ENCODE measurements at regions of chr12 and their contacts with region 1.

Region 1: GRCh38 chr12:9634177-9634803 is 26.6 kb upstream of the KLRB1 start:
- DNase-seq: no peak
- H3K4me3 ChIP-seq: no peak overlapping the region
- H3K27ac ChIP-seq: no peak overlapping the region
- H3K4me1 ChIP-seq: no peaks in the 10 kb centered on the region
- H3K27me3 ChIP-seq: no peaks in the 10 kb centered on the region
- CTCF ChIP-seq: peak; percentile 35 to 57 (median 38)
- EP300 ChIP-seq: no peak
- POLR2A ChIP-seq: no peak

Region 2: GRCh38 chr12:9615420-9616136 is 18.7 kb before region 1 on chr12:
- intact Hi-C with region 1: no loop called
- DNase-seq: no peak
- H3K4me3 ChIP-seq: no peak overlapping the region
- H3K27ac ChIP-seq: no peak overlapping the region
- H3K4me1 ChIP-seq: no peaks in the 10 kb centered on the region
- H3K27me3 ChIP-seq: no peaks in the 10 kb centered on the region
- CTCF ChIP-seq: no peak
- EP300 ChIP-seq: no peak
- POLR2A ChIP-seq: no peak

Region 3: DNA sequence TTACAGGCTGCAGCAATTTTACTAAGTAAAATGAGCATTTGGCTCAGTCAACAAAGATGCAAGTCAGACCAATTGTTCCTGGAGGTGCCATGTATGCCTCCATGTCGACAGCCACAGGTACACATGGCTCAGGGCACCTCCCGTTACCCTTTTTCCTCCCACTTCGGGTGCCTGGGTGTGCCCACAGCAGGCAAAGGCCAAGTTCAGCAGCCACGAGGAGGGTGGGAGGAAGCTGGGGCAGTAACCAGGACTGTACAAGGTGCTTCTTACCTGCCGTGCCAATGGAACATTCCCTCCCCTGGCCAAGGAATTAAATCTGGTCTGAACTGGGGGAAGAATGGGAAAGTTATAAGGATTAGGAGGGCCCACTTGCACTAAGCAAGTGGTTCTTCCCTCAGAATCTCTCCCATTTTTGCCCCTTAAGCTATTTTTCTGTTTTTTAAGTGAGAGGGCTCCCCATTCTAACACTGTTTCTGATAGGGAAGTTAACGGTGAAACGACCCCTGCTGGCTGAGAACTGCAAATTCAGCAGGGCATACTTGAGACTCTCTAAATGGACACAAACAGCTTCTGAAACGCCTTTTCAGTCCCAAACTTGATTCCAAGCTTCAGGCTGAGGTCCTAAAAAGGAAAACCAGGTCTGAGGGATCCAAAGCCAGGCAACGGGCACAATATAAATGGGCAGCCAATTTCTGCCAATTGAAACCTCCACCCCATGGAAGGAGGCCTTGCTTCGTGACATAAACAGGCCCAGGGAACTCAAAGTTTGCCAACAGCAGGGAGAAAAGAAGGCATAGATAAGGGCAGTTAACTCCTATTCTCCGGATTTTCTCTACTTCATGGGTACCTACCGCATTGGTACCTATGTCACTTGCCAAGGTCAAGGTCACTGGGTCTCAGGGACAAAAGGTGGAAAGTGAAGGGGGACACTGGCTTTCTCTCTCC is 73.8 kb after region 1 on chr12:
- intact Hi-C with region 1: loop called (anchors 5 kb)
- DNase-seq: no peak
- H3K4me3 ChIP-seq: no peak overlapping the region
- H3K27ac ChIP-seq: no peak overlapping the region
- H3K4me1 ChIP-seq: peaks cover 0 to 7% (median 0%) of the 10 kb centered on the region in 4 donors
- H3K27me3 ChIP-seq: peaks cover 0 to 3% (median 0%) of the 10 kb centered on the region in 4 donors
- CTCF ChIP-seq: peak; percentile 62 to 82 (median 71)
- EP300 ChIP-seq: no peak
- POLR2A ChIP-seq: no peak